ENCODE measurements at regions of chr5 and their contacts with region 1.

Region 1: GRCh38 chr5:163564321-163564938 is 59.0 kb downstream of the MAT2B start:
- DNase-seq: peak; percentile 80
- H3K4me3 ChIP-seq: no peak overlapping the region
- H3K27ac ChIP-seq: peak overlapping the region; percentile 36
- H3K4me1 ChIP-seq: peaks cover 52% of the 10 kb centered on the region
- H3K27me3 ChIP-seq: no peaks in the 10 kb centered on the region
- CTCF ChIP-seq: peak; percentile 60 to 72
- POLR2A ChIP-seq: no peak

Region 2: GRCh38 chr5:163489055-163489744 is 75.2 kb before region 1 on chr5:
- CTCF ChIA-PET with region 1: no interaction called
- POLR2A ChIA-PET with region 1: no interaction called
- dilution Hi-C with region 1: no loop called
- intact Hi-C with region 1: no loop called
- DNase-seq: no peak
- H3K4me3 ChIP-seq: no peak overlapping the region
- H3K27ac ChIP-seq: no peak overlapping the region
- H3K4me1 ChIP-seq: no peaks in the 10 kb centered on the region
- H3K27me3 ChIP-seq: no peaks in the 10 kb centered on the region
- CTCF ChIP-seq: peak in 1 of 2 donors; percentile 26
- POLR2A ChIP-seq: no peak

Region 3: GRCh38 chr5:163505368-163506094 is 58.9 kb before region 1 on chr5 and contains the start of gene MAT2B:
- CTCF ChIA-PET with region 1: no interaction called
- POLR2A ChIA-PET with region 1: no interaction called
- dilution Hi-C with region 1: no loop called
- intact Hi-C with region 1: loop called (anchors 2 kb)
- DNase-seq: peak; percentile 97
- H3K4me3 ChIP-seq: peak within 1 kb of the TSS; percentile 59 to 98 (median 72)
- H3K27ac ChIP-seq: peak within 1 kb of the TSS; percentile 70
- H3K4me1 ChIP-seq: peaks cover 37% of the 10 kb centered on the region
- H3K27me3 ChIP-seq: no peaks in the 10 kb centered on the region
- CTCF ChIP-seq: peak; percentile 52 to 68
- POLR2A ChIP-seq: peak; percentile 93
- total RNA-seq, gene MAT2B: 93.1 and 101 TPM in 2 replicates

Region 4: DNA sequence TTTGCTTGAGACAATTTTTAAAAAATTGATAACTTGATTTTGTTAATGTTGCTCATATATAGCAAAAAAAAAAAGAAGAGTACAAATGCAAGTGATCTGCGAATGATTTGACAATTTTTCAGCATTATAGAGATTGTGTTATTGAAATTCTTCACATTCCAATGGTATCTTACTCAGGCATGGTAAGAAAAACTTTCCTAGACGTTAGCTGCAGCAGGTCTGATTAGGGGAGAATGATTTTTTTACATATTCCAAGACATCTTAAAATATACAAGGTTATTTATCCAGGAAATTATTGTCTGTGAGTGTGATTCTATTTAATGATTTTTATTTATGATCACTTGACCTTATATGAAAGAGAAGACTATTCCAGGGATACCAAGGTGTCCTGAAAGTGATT is 302.9 kb after region 1 on chr5:
- CTCF ChIA-PET with region 1: no interaction called
- POLR2A ChIA-PET with region 1: no interaction called
- dilution Hi-C with region 1: no loop called
- intact Hi-C with region 1: loop called (anchors 1 kb)
- DNase-seq: peak; percentile 76
- H3K4me3 ChIP-seq: no peak overlapping the region
- H3K27ac ChIP-seq: peak overlapping the region; percentile 99
- H3K4me1 ChIP-seq: peaks cover 55% of the 10 kb centered on the region
- H3K27me3 ChIP-seq: no peaks in the 10 kb centered on the region
- CTCF ChIP-seq: no peak
- POLR2A ChIP-seq: peak; percentile 26

Region 5: DNA sequence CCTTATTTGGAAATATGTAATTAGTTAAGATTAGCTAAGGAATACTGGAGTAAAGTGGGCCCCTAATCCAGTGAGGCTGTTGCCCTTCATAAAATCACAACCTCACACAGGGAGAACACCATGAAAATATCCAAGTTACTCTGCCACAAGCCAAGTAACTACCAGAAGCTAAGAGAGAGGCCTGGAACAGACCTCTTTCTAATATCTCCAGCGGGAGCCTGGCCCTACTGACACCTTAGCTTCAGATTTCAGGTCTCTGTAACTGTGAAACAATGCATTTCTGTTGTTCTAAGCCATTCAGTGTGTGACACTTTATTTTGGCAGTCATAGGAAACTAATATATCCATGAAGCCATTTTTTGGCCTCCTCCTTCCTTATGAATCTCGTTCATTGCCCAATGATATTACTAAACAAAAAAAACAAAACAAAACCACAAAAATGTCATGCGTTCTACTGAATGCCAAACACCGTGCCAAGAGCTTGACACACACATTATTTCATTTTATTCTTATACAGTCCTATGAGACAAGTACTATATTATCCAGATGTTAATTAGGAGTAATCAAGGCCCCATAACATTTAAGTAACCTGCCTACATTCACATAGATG is 640.0 kb after region 1 on chr5:
- CTCF ChIA-PET with region 1: no interaction called
- POLR2A ChIA-PET with region 1: no interaction called
- dilution Hi-C with region 1: no loop called
- intact Hi-C with region 1: loop called (anchors 10 kb)
- DNase-seq: peak; percentile 50
- H3K4me3 ChIP-seq: no peak overlapping the region
- H3K27ac ChIP-seq: peak overlapping the region; percentile 87
- H3K4me1 ChIP-seq: peaks cover 28% of the 10 kb centered on the region
- H3K27me3 ChIP-seq: no peaks in the 10 kb centered on the region
- CTCF ChIP-seq: no peak
- POLR2A ChIP-seq: no peak

Region 6: GRCh38 chr5:164504141-164504772 is 939.8 kb after region 1 on chr5:
- CTCF ChIA-PET with region 1: interaction called, 182 read pairs
- POLR2A ChIA-PET with region 1: no interaction called
- dilution Hi-C with region 1: no loop called
- intact Hi-C with region 1: loop called (anchors 1 kb)
- DNase-seq: peak; percentile 71
- H3K4me3 ChIP-seq: no peak overlapping the region
- H3K27ac ChIP-seq: no peak overlapping the region
- H3K4me1 ChIP-seq: peaks cover 2% of the 10 kb centered on the region
- H3K27me3 ChIP-seq: no peaks in the 10 kb centered on the region
- CTCF ChIP-seq: peak; percentile 65 to 68
- POLR2A ChIP-seq: no peak

Region 7: GRCh38 chr5:165457859-165458481 is 1893.5 kb after region 1 on chr5:
- CTCF ChIA-PET with region 1: interaction called, 6 read pairs
- POLR2A ChIA-PET with region 1: no interaction called
- dilution Hi-C with region 1: no loop called
- intact Hi-C with region 1: loop called (anchors 10 kb)
- DNase-seq: peak; percentile 45
- H3K4me3 ChIP-seq: no peak overlapping the region
- H3K27ac ChIP-seq: no peak overlapping the region
- H3K4me1 ChIP-seq: no peaks in the 10 kb centered on the region
- H3K27me3 ChIP-seq: no peaks in the 10 kb centered on the region
- CTCF ChIP-seq: peak; percentile 27 to 47
- POLR2A ChIP-seq: no peak

Measured in endothelial cell of umbilical vein (primary cell).